Activated T-helper 1 cell treated with anti-CD3 and anti-CD28 coated beads, Interleukin-12 subunit alpha, Interleukin-12 subunit beta, Interleukin-2, Interleukin-4 antibody, amounts not matched to agents 30 ng/mL and 10 ng/mL and 1 ng/mL, durations not matched to agents 14 hours and 24 hours and 36 hours (primary cell): ENCODE measurements at regions of chr10 and their contacts with region 1.

Region 1: DNA sequence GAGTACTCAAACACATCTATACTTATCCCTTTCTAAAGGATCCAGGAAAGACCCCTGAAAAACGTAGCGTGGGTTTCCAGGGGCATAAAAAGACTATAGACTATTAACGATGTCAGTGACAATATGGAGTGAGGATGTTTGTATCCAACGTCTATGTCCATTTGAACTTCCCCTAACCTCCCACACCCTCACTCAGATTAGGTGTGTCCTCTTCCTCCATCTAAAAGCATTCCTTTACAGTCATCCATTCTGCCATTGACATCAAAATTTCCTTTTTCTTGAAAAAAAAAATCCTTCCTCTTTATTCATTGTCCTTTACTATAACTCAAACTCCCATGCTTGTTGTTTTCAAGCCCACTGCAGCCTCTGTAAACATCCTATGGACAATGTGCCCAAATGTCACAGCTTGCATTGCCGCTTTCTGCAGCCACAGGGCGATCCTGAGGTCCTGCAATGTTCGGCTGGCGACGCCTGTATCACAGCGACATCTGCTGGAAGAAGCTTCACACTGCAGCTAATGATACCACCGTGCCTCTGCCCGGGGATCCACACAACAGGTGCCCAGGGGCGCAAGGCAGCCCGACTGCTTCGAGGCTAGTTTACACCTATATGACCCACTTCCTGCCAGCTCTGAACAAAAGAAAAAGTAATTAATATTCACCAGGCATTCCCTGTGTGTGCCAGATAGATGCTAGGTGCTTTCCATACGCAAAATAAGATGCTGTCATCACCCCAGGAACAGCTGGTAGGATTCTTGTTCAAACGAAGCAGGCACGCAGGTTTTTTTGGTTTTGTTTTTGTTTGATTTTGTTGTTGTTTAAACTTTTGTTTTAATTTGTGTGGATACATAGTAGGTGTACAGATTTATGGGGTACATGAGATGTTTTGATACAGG is 267.9 kb upstream of the GHITM start:
- DNase-seq: peak; percentile 44
- H3K4me3 Mint-ChIP-seq: no peak overlapping the region
- H3K27ac Mint-ChIP-seq: no peak overlapping the region
- H3K4me1 Mint-ChIP-seq: no peaks in the 10 kb centered on the region
- H3K27me3 Mint-ChIP-seq: no peaks in the 10 kb centered on the region

Region 2: DNA sequence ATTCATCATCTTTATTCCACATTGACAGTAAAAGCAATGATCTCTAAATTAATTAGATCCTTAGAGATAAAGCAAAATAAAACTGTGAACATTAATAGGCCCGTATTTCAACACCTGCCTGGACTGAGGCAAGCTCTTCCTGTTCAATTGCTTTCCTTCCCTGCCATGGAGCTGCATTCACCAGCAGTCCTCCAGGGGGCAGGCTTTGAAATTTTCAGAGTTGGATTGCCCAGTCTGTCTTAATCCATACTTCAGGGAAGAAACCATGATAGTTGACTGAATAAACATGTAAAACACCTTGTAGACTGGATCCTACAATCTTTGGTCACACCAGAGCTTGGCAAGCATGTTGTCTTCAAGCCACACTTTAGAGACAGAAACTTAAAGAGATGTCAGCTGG is 1059.8 kb before region 1 on chr10:
- intact Hi-C with region 1: loop called (anchors 5 kb)
- DNase-seq: no peak
- H3K4me3 Mint-ChIP-seq: no peak overlapping the region
- H3K27ac Mint-ChIP-seq: no peak overlapping the region
- H3K4me1 Mint-ChIP-seq: no peaks in the 10 kb centered on the region
- H3K27me3 Mint-ChIP-seq: no peaks in the 10 kb centered on the region